ENCODE measurements at regions of chr2 and their contacts with region 1.

Region 1: GRCh38 chr2:20051532-20052228 is at the start of gene LAPTM4A:
- DNase-seq: peak; percentile 96 to 100
- H3K4me3 ChIP-seq: peak within 1 kb of the TSS; percentile 85
- H3K27ac ChIP-seq: peak within 1 kb of the TSS; percentile 94
- H3K4me1 ChIP-seq: peaks cover 36% of the 10 kb centered on the region
- H3K27me3 ChIP-seq: no peaks in the 10 kb centered on the region
- CTCF ChIP-seq: no peak
- total RNA-seq, gene LAPTM4A: 96.6 and 125 TPM in 2 replicates

Region 2: GRCh38 chr2:19643117-19643518 is 408.6 kb before region 1 on chr2:
- CTCF ChIA-PET with region 1: no interaction called
- POLR2A ChIA-PET with region 1: no interaction called
- intact Hi-C with region 1: no loop called
- DNase-seq: peak in 1 of 2 experiments; percentile 28
- H3K4me3 ChIP-seq: no peak overlapping the region
- H3K27ac ChIP-seq: no peak overlapping the region
- H3K4me1 ChIP-seq: no peaks in the 10 kb centered on the region
- H3K27me3 ChIP-seq: no peaks in the 10 kb centered on the region
- CTCF ChIP-seq: no peak

Region 3: DNA sequence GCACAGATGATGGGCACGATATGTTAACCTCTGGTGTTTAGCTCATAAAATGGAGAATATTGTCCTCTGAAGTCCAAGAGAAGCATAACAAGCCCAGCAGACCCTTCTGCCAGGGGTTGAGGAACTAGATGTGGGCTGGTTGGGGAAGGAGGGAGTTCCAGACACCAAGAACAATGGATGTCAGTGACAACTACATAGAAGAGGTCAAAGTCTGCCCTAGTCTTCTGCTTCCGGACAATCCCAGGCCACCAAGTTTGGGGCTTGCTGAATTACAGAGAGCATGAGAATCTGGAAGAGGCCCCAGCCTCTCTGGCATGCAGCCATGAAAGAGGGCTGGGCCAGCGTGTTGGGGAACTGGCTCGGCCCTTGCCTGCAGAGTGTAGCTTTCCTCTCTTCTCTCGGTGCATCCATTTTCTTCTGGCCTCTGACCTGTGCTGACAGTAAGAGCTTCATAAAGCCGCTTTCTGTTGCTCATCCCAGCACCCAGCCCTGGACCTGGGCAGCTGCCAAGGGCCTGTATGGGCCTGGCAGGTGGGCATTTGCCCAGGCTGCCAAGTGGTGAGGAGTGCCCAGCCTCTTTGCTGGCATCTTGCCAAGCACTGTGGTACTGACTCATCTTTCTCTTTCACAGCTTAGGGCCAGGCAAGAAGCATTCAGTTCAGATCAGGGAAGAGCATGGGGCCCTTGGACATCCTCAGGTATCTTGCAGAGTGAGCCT is 14.4 kb after region 1 on chr2:
- CTCF ChIA-PET with region 1: no interaction called
- POLR2A ChIA-PET with region 1: interaction called, 12 read pairs
- intact Hi-C with region 1: loop called (anchors 1 kb)
- DNase-seq: peak; percentile 80 to 90
- H3K4me3 ChIP-seq: no peak overlapping the region
- H3K27ac ChIP-seq: peak overlapping the region; percentile 88
- H3K4me1 ChIP-seq: peaks cover 64% of the 10 kb centered on the region
- H3K27me3 ChIP-seq: no peaks in the 10 kb centered on the region
- CTCF ChIP-seq: no peak

Region 4: GRCh38 chr2:20071397-20072383 is 20.0 kb after region 1 on chr2:
- CTCF ChIA-PET with region 1: no interaction called
- POLR2A ChIA-PET with region 1: interaction called, 12 read pairs
- intact Hi-C with region 1: loop called (anchors 1 kb)
- DNase-seq: peak; percentile 74 to 97
- H3K4me3 ChIP-seq: peak overlapping the region; percentile 48; the same call in 1 of the 2 replicates
- H3K27ac ChIP-seq: peak overlapping the region; percentile 99
- H3K4me1 ChIP-seq: peaks cover 74% of the 10 kb centered on the region
- H3K27me3 ChIP-seq: no peaks in the 10 kb centered on the region
- CTCF ChIP-seq: no peak

Region 5: DNA sequence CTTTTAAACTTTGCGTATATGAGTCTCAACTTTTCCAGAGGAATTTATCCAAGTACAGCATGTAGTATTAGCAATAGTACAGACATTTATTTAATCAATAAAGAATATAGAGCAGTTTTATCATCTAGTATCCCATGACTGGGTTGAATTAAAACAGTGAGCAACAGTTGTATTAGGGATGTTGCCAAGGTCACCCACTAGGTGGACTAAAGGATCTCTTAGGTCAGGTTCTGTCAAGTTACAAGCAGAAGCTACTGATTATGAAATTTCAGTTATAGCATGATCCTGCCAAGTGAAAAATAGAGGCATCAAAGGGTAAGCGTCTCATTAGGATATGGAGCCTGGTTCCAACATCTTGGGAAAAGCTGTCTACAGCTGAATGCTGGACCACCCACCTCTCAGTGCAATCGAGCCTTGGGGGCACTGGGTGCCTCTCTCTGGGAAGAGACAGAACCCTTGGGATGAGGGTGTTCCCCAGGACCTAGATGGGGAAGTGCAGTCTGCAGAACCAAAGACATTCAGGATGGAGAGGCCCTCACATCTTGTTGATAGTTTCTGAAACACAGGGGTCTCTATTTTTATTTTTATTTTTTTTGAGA is 51.9 kb after region 1 on chr2:
- CTCF ChIA-PET with region 1: no interaction called
- POLR2A ChIA-PET with region 1: no interaction called
- intact Hi-C with region 1: no loop called
- DNase-seq: no peak
- H3K4me3 ChIP-seq: no peak overlapping the region
- H3K27ac ChIP-seq: no peak overlapping the region
- H3K4me1 ChIP-seq: peaks cover 18% of the 10 kb centered on the region
- H3K27me3 ChIP-seq: no peaks in the 10 kb centered on the region
- CTCF ChIP-seq: peak; percentile 68